ENCODE measurements at regions of chr14 and their contacts with region 1.

Region 1: DNA sequence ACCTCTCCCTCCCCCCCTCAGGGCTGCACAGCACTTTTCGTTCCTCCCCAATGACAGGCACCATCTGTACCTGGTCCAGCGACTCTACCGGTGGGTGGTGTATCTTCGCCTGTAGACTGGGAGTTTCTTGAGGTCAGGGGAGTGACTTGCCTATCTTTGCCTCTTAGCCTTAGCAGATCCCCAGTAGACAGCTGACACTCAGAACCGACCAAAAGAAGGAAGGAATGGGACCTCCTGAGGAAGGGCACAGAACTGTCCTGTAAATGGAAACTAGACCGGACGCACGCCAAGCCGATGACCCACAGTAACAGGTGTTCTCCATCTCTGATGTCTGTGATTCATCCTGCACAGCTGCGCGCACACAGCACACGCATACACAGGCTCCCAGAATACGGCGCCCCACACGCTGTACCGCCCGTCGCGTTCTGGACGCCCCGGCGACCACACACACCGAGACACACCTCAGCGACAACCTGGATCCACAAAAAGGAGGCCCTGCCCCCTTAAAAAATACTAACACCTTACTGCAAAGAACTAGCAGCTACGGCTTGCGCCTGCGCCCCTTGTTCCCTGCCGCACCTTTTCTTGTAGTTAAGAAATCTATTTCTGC is 673 bp upstream of the TTC9 start:
- DNase-seq: peak; percentile 36
- H3K4me3 Mint-ChIP-seq: peak overlapping the region; percentile 87
- H3K27ac Mint-ChIP-seq: peak overlapping the region; percentile 76
- H3K4me1 Mint-ChIP-seq: peaks cover 49% of the 10 kb centered on the region
- H3K27me3 Mint-ChIP-seq: peaks cover 3% of the 10 kb centered on the region

Region 2: GRCh38 chr14:70655110-70655826 is 14.2 kb after region 1 on chr14:
- intact Hi-C with region 1: loop called (anchors 1 kb)
- DNase-seq: peak; percentile 77
- H3K4me3 Mint-ChIP-seq: peak overlapping the region; percentile 81
- H3K27ac Mint-ChIP-seq: peak overlapping the region; percentile 99
- H3K4me1 Mint-ChIP-seq: peaks cover 74% of the 10 kb centered on the region
- H3K27me3 Mint-ChIP-seq: no peaks in the 10 kb centered on the region

Region 3: GRCh38 chr14:70660949-70661893 is 20.2 kb after region 1 on chr14:
- intact Hi-C with region 1: loop called (anchors 2 kb)
- DNase-seq: peak; percentile 29
- H3K4me3 Mint-ChIP-seq: peak overlapping the region; percentile 60
- H3K27ac Mint-ChIP-seq: peak overlapping the region; percentile 76
- H3K4me1 Mint-ChIP-seq: peaks cover 79% of the 10 kb centered on the region
- H3K27me3 Mint-ChIP-seq: no peaks in the 10 kb centered on the region

Region 4: DNA sequence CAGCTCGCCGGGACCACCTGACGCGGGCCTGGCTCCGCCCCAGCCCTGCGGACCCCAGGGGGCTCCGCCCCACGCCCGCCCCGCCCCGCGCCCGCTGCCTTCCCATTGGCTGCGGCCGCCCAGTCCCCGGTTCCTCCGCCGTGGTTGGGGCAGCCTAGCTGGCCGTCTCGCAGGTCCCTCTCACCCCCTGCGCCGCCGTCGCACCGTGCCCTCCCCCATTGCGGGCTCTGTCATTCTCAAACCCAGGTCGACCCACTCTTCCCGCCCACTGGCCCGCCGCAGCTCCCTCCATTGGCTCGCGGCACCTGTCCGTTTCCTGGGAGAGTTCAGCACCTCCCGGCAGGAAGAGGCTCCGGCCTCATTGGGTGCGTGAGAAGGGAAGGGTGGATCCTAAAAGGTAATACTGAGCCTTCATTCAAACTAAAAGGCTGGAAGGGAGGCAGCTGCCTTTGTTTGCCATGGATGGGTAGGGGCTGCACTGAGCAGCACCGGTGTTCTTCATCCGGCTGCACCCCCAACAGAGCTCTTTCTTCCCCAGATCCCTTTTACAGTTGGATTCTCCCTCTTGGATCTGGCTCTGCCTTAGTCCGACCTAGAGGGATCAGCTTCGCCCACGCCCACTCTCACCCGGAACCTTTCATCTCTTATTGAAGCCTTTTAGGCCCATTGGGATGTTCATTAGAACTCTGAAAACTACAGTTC is 168.7 kb after region 1 on chr14:
- intact Hi-C with region 1: loop called (anchors 5 kb)
- DNase-seq: peak; percentile 91
- H3K4me3 Mint-ChIP-seq: no peak overlapping the region
- H3K27ac Mint-ChIP-seq: peak overlapping the region; percentile 64
- H3K4me1 Mint-ChIP-seq: peaks cover 10% of the 10 kb centered on the region
- H3K27me3 Mint-ChIP-seq: peaks cover 2% of the 10 kb centered on the region

Measured in activated T-helper 2 cell treated with anti-CD3 and anti-CD28 coated beads, Interferon-gamma antibody, Interleukin-2, Interleukin-4, amounts not matched to agents 10 μg/mL and 5 μg/mL and 100 μg/mL, durations not matched to agents 14 hours and 24 hours and 36 hours (primary cell).